ENCODE measurements at regions of chr9 and their contacts with region 1.

Region 1: GRCh38 chr9:15277400-15278090 is 29.5 kb downstream of the TTC39B start:
- DNase-seq: no peak
- ATAC-seq: no peak
- H3K4me3 ChIP-seq: no peak overlapping the region
- H3K27ac ChIP-seq: no peak overlapping the region
- H3K4me1 ChIP-seq: no peaks in the 10 kb centered on the region
- H3K27me3 ChIP-seq: no peaks in the 10 kb centered on the region
- CTCF ChIP-seq: peak; percentile 9; the same call in 1 of the 2 replicates

Region 2: DNA sequence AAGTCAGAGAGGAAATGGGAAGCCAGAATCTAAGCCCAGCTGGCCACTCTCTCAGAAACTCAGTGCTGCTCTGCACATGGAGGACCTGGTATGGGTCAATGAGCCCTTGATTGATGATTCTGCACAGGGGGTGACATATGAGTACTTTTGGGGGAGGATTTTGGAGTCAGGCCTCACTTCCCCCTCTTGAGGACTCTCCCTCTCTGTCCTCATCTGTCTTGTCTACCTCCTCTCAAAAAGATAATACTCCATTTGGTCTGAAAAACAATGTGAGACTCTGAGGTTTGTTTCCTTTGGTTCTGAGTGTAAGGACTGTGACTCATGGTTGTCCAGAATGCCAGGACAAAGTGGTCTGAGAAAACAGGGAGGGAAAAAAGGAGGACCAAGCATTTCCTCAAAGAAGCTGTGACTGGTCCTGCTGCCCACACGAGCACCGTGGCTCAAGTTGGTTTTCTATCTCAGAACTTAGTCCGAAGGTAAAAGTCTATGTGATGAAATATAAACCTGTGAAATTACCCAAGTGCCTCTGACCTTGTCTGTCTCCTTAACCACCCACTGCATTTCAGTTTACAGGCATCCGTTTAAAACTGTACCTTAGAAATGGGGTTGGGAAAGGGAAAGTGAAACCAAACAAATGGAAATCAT is 18.3 kb after region 1 on chr9:
- CTCF ChIA-PET with region 1: no interaction called
- POLR2A ChIA-PET with region 1: no interaction called
- in situ Hi-C with region 1: no loop called
- intact Hi-C with region 1: no loop called
- DNase-seq: no peak
- ATAC-seq: no peak
- H3K4me3 ChIP-seq: peak overlapping the region; percentile 37 to 49
- H3K27ac ChIP-seq: peak overlapping the region; percentile 70
- H3K4me1 ChIP-seq: no peaks in the 10 kb centered on the region
- H3K27me3 ChIP-seq: no peaks in the 10 kb centered on the region
- CTCF ChIP-seq: no peak

Region 3: GRCh38 chr9:15422372-15423230 is 145.1 kb after region 1 on chr9 and contains the start of gene SNAPC3:
- CTCF ChIA-PET with region 1: no interaction called
- POLR2A ChIA-PET with region 1: no interaction called
- in situ Hi-C with region 1: no loop called
- intact Hi-C with region 1: loop called (anchors 10 kb)
- DNase-seq: no peak
- ATAC-seq: peak; percentile 99
- H3K4me3 ChIP-seq: peak within 1 kb of the TSS; percentile 66 to 73
- H3K27ac ChIP-seq: peak within 1 kb of the TSS; percentile 87
- H3K4me1 ChIP-seq: no peaks in the 10 kb centered on the region
- H3K27me3 ChIP-seq: no peaks in the 10 kb centered on the region
- CTCF ChIP-seq: no peak
- total RNA-seq, gene SNAPC3: 11.5 TPM

Measured in Panc1 (cell line).